Kidney (tissue), 22 donors: ENCODE measurements at regions of chr19 and their contacts with region 1.

Region 1: DNA sequence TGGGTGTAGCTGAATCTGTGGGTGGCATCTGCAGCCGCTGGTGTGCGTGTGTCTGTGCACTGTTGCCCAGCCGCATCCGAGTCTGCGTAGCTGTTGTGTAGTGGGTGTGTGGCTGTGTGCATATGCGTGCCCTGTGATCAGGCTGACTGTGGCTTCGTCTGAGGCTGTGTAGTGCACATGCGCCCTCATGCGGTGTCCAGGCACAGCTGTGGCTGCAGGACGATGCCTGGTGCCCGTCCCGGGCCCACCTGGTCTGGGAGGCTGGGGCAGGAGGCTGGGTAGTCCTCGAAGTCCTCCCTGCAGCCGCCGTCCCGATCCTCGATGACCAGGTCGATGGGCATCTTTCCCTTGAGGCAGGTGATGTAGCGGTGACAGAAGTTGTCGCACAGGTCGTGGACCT is 4.9 kb downstream of the MEIS3 start:
- DNase-seq: peak in 1 of 5 donors; percentile 70
- H3K4me3 ChIP-seq: no peak overlapping the region
- H3K27ac ChIP-seq: no peak overlapping the region
- H3K4me1 ChIP-seq: peaks cover 0 to 2% (median 0%) of the 10 kb centered on the region in 3 donors
- H3K27me3 ChIP-seq: peaks cover 5% of the 10 kb centered on the region
- CTCF ChIP-seq: no peak

Region 2: DNA sequence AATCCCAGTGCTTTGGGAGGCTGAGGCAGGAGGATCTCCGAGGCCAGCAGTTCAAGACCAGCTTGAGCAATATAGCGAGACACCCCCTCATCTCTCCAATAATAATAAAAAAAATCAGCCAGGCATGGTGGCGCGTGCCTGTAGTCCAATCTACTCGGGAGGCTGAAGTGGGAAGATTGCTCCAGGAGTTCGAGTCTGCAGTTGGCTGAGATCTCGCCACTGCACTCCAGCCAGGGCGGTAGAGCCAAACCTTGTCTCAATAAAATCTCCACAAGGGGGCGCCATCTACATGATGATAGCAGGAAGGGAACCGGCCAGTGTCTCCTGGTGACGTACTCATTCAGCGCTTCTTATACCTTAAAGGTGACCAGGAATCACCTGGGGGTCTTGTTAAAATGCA is 118.4 kb before region 1 on chr19:
- intact Hi-C with region 1: loop called (anchors 10 kb)
- DNase-seq: peak in 4 of 5 donors; percentile 69 to 90 (median 78)
- H3K4me3 ChIP-seq: no peak overlapping the region
- H3K27ac ChIP-seq: no peak overlapping the region
- H3K4me1 ChIP-seq: no peaks in the 10 kb centered on the region
- H3K27me3 ChIP-seq: no peaks in the 10 kb centered on the region
- CTCF ChIP-seq: peak; percentile 76